CD14-positive monocyte (primary cell): ENCODE measurements at regions of chr9 and their contacts with region 1.

Region 1: DNA sequence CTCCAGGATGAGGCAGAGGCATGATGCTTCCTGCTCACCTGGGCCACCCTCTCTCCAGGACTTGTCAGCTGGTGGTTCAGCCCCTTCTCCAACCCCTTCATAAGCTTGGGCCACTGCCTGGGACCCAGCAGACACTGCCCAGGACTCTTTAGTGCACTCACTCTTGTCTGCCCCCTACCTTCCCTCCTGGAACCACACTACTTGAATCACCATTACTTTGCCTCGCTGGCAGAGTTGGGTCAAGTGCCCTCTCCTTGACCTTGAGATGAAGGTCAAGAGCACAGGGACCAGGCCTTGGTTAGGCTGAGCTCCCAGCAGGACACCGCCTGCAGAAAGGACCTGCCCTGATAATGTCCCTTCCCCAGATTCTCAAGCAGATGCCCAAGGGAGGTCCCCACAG is 8.5 kb upstream of the ENDOG start:
- DNase-seq: no peak
- H3K4me3 ChIP-seq: no peak overlapping the region
- H3K4me3 Mint-ChIP-seq: no peak overlapping the region
- H3K27ac ChIP-seq: no peak overlapping the region
- H3K27ac Mint-ChIP-seq: peak overlapping the region in 2 of 7 donors; percentile 28 to 36
- H3K4me1 ChIP-seq: no peaks in the 10 kb centered on the region
- H3K4me1 Mint-ChIP-seq: no peaks in the 10 kb centered on the region
- H3K27me3 ChIP-seq: no peaks in the 10 kb centered on the region
- H3K27me3 Mint-ChIP-seq: peaks cover 0 to 4% (median 1%) of the 10 kb centered on the region in 3 donors
- CTCF ChIP-seq: no peak

Region 2: GRCh38 chr9:128742401-128742800 is 67.4 kb before region 1 on chr9:
- intact Hi-C with region 1: loop called in 1 of 2 experiments (anchors 10 kb)
- DNase-seq: no peak
- H3K4me3 ChIP-seq: no peak overlapping the region
- H3K4me3 Mint-ChIP-seq: no peak overlapping the region
- H3K27ac ChIP-seq: no peak overlapping the region
- H3K27ac Mint-ChIP-seq: peak overlapping the region in 1 of 7 donors; percentile 50
- H3K4me1 ChIP-seq: no peaks in the 10 kb centered on the region
- H3K4me1 Mint-ChIP-seq: no peaks in the 10 kb centered on the region
- H3K27me3 ChIP-seq: no peaks in the 10 kb centered on the region
- H3K27me3 Mint-ChIP-seq: peaks cover 0 to 3% (median 1%) of the 10 kb centered on the region in 3 donors
- CTCF ChIP-seq: no peak

Region 3: DNA sequence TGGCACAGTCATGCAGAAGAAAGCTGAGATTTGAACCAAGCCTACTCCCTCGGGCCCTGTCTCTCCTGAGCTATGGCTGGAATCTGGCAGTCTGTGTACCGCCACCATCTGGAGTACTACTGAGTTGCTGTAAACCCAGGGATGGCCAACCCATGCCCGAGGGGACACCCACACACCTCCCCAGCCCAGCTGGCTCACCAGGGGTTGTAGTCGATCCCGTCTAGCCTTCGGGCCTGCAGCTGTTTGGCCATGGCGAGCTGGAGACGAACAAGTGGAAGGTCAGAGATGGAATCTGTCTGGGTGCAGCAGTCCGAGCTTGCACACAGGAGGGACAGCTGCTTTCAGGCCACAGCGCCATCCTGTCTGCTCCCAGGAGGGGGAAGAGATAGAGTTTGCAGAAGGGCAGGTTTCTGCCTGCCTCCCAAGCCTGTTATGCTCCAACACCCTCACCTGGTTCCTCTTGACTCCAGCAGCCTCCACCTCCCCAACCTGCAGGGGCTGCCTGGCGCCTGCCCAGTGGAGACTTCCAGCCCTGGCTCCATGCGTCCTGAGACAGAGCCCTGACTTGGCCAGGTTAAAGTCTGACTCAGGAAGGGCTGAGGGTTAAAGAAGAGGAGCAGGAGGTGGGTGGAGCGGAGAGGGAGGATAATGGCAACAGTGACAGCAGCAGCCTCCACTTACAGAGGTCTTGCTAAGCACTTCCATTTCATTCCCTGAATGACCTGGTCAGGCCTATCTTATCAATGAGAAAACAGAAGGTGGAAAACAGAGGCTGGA is 35.5 kb after region 1 on chr9:
- intact Hi-C with region 1: no loop called
- DNase-seq: no peak
- H3K4me3 ChIP-seq: no peak overlapping the region
- H3K4me3 Mint-ChIP-seq: no peak overlapping the region
- H3K27ac ChIP-seq: no peak overlapping the region
- H3K27ac Mint-ChIP-seq: no peak overlapping the region
- H3K4me1 ChIP-seq: no peaks in the 10 kb centered on the region
- H3K4me1 Mint-ChIP-seq: no peaks in the 10 kb centered on the region
- H3K27me3 ChIP-seq: no peaks in the 10 kb centered on the region
- H3K27me3 Mint-ChIP-seq: no peaks in the 10 kb centered on the region
- CTCF ChIP-seq: no peak

Region 4: DNA sequence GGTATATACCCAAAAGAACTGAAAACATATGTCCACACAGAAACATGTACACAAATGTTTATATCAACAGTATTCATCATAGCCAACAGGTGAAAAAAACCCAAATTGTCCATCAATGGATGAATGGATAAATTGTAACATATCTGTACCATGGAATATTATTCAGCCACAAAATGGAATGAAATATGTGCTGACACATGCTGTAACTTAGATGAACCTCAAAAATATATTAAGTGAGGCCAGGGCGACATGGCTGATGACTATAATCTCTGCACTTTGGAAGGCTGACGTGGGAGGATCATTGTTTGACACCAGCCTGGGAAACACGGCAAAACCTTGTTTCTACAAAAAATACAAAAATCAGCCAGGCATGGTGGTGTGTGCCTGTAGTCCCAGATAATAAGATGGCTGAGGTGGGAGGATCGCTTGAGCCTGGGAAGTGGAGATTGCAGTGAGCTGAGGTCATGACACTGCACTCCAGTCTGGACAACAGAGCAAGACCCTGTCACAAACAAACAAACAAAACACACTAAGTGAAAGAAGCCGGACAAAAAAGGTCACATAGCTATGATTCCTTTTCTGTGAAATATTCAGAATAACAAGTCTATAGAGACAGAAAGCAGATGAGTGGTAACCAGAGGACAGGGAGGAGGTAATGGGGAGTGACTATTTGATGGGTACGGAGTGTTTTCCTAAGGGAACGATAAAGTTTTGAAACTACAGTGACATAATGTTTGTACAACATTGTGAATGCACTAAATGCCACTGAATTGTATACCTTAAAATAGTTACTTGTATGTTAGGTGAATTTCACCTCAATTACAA is 60.5 kb after region 1 on chr9:
- intact Hi-C with region 1: no loop called
- DNase-seq: no peak
- H3K4me3 ChIP-seq: no peak overlapping the region
- H3K4me3 Mint-ChIP-seq: no peak overlapping the region
- H3K27ac ChIP-seq: no peak overlapping the region
- H3K27ac Mint-ChIP-seq: no peak overlapping the region
- H3K4me1 ChIP-seq: peaks cover 9 to 11% of the 10 kb centered on the region in 2 donors
- H3K4me1 Mint-ChIP-seq: peaks cover 12% of the 10 kb centered on the region
- H3K27me3 ChIP-seq: no peaks in the 10 kb centered on the region
- H3K27me3 Mint-ChIP-seq: no peaks in the 10 kb centered on the region
- CTCF ChIP-seq: no peak